ENCODE measurements at regions of chr2 and their contacts with region 1.

Region 1: DNA sequence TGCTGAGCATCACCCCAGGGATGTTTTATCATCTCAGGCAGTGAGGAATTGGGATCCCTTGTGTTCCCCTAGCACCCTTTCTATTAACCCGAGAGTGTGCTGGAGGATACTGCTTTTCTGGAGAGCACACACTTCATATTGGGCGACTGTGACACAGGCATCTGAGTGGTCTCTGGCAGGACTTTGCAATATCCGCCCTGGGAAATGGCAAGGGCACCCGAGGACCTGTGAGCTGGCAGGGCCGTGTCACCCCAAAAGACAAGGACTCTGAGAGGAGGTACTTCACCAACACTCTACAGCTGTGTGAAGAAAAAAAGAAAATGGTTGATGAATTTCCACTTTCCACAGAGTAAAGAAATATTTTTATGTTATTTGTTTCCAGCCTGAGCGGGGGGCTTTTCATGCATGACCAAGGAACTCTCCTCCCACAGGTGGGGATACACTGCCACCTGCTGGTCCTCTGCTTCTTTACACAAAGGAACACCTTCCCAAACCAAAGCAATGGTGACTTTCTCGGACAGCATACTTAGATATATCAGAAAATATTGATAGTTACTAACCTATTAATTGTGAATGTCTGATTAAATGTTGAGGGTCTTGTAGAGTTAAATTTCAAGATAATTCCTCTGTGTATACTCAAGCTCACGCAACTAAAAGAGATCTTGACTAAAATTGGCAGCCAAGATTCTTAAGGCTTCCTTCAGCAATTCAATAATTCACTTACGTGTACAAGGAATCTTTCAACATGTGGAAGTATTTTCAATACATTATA is 45.9 kb upstream of the REG3G start:
- DNase-seq: no peak
- ATAC-seq: peak; percentile 64
- H3K4me3 ChIP-seq: no peak overlapping the region
- H3K27ac ChIP-seq: no peak overlapping the region
- H3K4me1 ChIP-seq: peaks cover 33% of the 10 kb centered on the region
- H3K27me3 ChIP-seq: no peaks in the 10 kb centered on the region
- CTCF ChIP-seq: peak; percentile 79 to 91 (median 85)
- EP300 ChIP-seq: no peak
- POLR2A ChIP-seq: no peak
- RAD21 ChIP-seq: peak; percentile 91

Region 2: DNA sequence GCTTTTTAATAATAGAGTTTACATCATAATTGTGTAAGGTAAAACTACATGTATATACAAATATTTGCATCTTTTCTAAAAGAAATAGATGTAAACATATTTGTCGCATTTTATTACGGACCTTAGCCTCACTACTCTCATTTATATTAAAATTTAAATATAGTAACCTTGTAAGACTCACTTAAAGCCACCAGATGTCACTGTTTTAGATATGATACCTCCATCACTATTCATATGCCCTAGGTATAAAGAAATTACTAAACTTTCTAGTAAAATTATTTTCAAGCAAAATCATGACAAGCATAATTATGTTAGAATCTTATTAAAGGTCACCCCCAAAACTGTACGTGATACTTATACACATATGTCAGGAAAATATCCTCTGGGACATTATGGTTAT is 628.4 kb before region 1 on chr2:
- CTCF ChIA-PET with region 1: interaction called, 7 read pairs
- POLR2A ChIA-PET with region 1: no interaction called
- RAD21 ChIA-PET with region 1: no interaction called
- SMC1A ChIA-PET with region 1: no interaction called
- in situ Hi-C with region 1: loop called (anchors 10 kb)
- intact Hi-C with region 1: loop called (anchors 1 kb)
- DNase-seq: no peak
- ATAC-seq: peak; percentile 74
- H3K4me3 ChIP-seq: no peak overlapping the region
- H3K27ac ChIP-seq: no peak overlapping the region
- H3K4me1 ChIP-seq: no peaks in the 10 kb centered on the region
- H3K27me3 ChIP-seq: no peaks in the 10 kb centered on the region
- CTCF ChIP-seq: no peak; a peak in 1 of 6 replicates
- EP300 ChIP-seq: no peak
- POLR2A ChIP-seq: no peak
- RAD21 ChIP-seq: no peak

Region 3: GRCh38 chr2:78676921-78677696 is 302.5 kb before region 1 on chr2:
- CTCF ChIA-PET with region 1: interaction called, 101 read pairs
- POLR2A ChIA-PET with region 1: no interaction called
- RAD21 ChIA-PET with region 1: interaction called, 11 read pairs
- SMC1A ChIA-PET with region 1: interaction called, 27 read pairs
- in situ Hi-C with region 1: loop called (anchors 5 kb)
- intact Hi-C with region 1: loop called (anchors 1 kb)
- DNase-seq: no peak
- ATAC-seq: no peak
- H3K4me3 ChIP-seq: no peak overlapping the region
- H3K27ac ChIP-seq: no peak overlapping the region
- H3K4me1 ChIP-seq: no peaks in the 10 kb centered on the region
- H3K27me3 ChIP-seq: no peaks in the 10 kb centered on the region
- CTCF ChIP-seq: no peak
- EP300 ChIP-seq: no peak
- POLR2A ChIP-seq: no peak
- RAD21 ChIP-seq: no peak

Region 4: GRCh38 chr2:78861546-78861945 is 118.0 kb before region 1 on chr2:
- CTCF ChIA-PET with region 1: interaction called, 8 read pairs
- POLR2A ChIA-PET with region 1: no interaction called
- RAD21 ChIA-PET with region 1: interaction called, 4 read pairs
- SMC1A ChIA-PET with region 1: no interaction called
- in situ Hi-C with region 1: no loop called
- intact Hi-C with region 1: loop called (anchors 5 kb)
- DNase-seq: no peak
- ATAC-seq: peak; percentile 77
- H3K4me3 ChIP-seq: no peak overlapping the region
- H3K27ac ChIP-seq: no peak overlapping the region
- H3K4me1 ChIP-seq: no peaks in the 10 kb centered on the region
- H3K27me3 ChIP-seq: no peaks in the 10 kb centered on the region
- CTCF ChIP-seq: peak; percentile 33 to 52 (median 42); a peak in 5 of 6 replicates
- EP300 ChIP-seq: no peak
- POLR2A ChIP-seq: no peak
- RAD21 ChIP-seq: peak; percentile 42

Region 5: GRCh38 chr2:78940998-78941397 is 38.6 kb before region 1 on chr2:
- CTCF ChIA-PET with region 1: no interaction called
- POLR2A ChIA-PET with region 1: no interaction called
- RAD21 ChIA-PET with region 1: no interaction called
- SMC1A ChIA-PET with region 1: no interaction called
- in situ Hi-C with region 1: no loop called
- intact Hi-C with region 1: loop called (anchors 1 kb)
- DNase-seq: no peak
- ATAC-seq: peak; percentile 97
- H3K4me3 ChIP-seq: no peak overlapping the region
- H3K27ac ChIP-seq: no peak overlapping the region
- H3K4me1 ChIP-seq: no peaks in the 10 kb centered on the region
- H3K27me3 ChIP-seq: no peaks in the 10 kb centered on the region
- CTCF ChIP-seq: no peak
- EP300 ChIP-seq: no peak
- POLR2A ChIP-seq: no peak
- RAD21 ChIP-seq: no peak

Region 6: GRCh38 chr2:78992451-78992806 is 12.9 kb after region 1 on chr2:
- CTCF ChIA-PET with region 1: interaction called, 24 read pairs
- POLR2A ChIA-PET with region 1: no interaction called
- RAD21 ChIA-PET with region 1: interaction called, 3 read pairs
- SMC1A ChIA-PET with region 1: interaction called, 10 read pairs
- in situ Hi-C with region 1: no loop called
- intact Hi-C with region 1: no loop called
- DNase-seq: no peak
- ATAC-seq: peak; percentile 79
- H3K4me3 ChIP-seq: no peak overlapping the region; the same call in 1 of the 2 replicates
- H3K27ac ChIP-seq: no peak overlapping the region
- H3K4me1 ChIP-seq: no peaks in the 10 kb centered on the region
- H3K27me3 ChIP-seq: peaks cover 2 to 4% of the 10 kb centered on the region in 2 experiments; a peak in 3 of 4 replicates
- CTCF ChIP-seq: peak; percentile 21 to 50 (median 33)
- EP300 ChIP-seq: no peak
- POLR2A ChIP-seq: no peak
- RAD21 ChIP-seq: no peak